Heart right ventricle (tissue), 16 donors: ENCODE measurements at regions of chr2 and their contacts with region 1.

Region 1: GRCh38 chr2:106232638-106233349 is 38.7 kb upstream of the UXS1 start:
- DNase-seq: peak; percentile 30 to 70
- ATAC-seq: peak; percentile 90 to 99 (median 96)
- H3K4me3 ChIP-seq: no peak overlapping the region
- H3K27ac ChIP-seq: no peak overlapping the region
- H3K4me1 ChIP-seq: peaks cover 0 to 2% (median 0%) of the 10 kb centered on the region in 9 donors
- H3K27me3 ChIP-seq: no peaks in the 10 kb centered on the region
- CTCF ChIP-seq: no peak

Region 2: DNA sequence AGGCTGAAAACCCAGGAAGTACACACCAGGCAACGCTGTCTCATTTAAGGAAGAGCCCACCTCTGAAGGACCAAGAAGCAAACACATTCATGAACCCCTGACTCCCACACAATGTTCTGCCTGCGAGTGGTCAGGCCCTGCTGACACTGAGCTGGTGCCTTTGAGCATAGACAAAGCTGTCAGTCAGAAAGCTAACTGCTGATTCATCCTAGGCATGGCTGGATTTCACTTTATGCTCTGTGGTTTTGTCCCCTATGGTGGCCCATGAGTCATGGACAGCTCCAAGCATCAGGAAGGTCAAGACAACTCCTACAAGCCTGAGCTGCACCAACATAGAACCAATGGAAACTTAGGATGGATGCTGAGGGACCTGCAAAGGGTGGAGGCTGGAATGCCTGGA is 117.5 kb before region 1 on chr2:
- intact Hi-C with region 1: loop called in 1 of 10 experiments (anchors 5 kb)
- DNase-seq: no peak
- ATAC-seq: peak in 1 of 8 donors; percentile 13
- H3K4me3 ChIP-seq: no peak overlapping the region
- H3K27ac ChIP-seq: no peak overlapping the region
- H3K4me1 ChIP-seq: peaks cover 0 to 21% (median 12%) of the 10 kb centered on the region in 9 donors
- H3K27me3 ChIP-seq: no peaks in the 10 kb centered on the region
- CTCF ChIP-seq: no peak

Region 3: DNA sequence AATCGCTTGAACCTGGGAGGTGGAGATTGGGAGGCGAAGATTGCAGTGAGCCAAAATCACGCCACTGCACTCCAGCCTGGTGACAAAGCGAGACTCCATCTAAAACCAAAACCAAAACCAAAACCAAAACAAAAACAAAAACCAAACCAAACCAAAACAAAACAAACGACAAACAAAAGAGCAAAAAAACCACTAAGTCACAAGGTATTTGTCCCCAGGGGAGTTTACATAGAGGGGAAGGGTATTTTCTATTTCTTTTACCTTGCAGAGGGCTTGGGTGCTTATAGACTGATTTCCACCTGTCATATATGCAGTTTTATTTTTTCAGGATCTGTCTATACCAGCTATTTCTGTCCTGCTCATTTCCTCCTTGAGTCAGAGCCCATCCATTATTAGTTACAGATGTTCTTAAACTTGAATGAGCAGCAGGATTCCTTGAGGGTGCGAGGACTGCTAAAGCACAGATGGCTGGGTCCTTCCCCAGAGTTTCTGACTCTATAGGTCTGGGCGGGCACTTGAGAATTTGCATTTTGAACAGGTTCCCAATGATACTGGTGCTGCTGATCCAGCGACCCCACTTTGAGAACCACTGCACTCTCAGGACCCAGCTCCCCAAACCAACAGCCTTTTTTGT is 63.5 kb after region 1 on chr2:
- intact Hi-C with region 1: no loop called
- DNase-seq: no peak
- ATAC-seq: no peak
- H3K4me3 ChIP-seq: no peak overlapping the region
- H3K27ac ChIP-seq: no peak overlapping the region
- H3K4me1 ChIP-seq: no peaks in the 10 kb centered on the region
- H3K27me3 ChIP-seq: peaks cover 0 to 3% (median 0%) of the 10 kb centered on the region in 7 donors
- CTCF ChIP-seq: no peak